ENCODE measurements at regions of chrX and their contacts with region 1.

Region 1: DNA sequence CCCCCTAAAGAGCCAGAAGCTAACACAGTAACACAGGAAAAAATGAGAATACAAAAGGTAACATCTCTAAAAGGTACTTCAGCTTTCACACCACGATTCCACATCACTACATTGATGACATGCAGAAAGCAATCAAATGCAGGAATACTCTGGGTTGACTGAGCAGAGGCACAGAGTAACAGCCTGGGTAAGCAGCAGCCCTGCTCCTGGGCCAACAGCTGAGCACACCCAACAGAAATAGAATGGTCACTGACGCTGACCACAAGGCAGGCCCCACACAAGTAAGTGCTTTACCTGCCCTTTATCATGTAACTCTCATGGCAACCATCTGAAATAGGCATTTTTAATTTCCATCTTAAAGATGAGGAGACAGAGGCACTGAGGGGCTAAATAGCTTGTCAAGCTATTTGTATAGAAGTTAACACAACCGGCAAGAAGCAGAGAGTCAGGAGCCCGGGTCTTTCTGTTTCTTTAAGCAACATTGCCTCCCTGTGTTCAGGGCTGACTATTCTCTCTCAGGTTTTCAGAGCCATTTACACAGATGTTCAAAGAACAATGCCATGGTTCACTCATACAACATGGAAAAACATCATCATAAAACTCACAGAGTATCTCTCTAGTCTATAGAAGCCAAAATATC is 168.9 kb downstream of the ZNF674 start:
- DNase-seq: peak; percentile 1
- H3K4me3 Mint-ChIP-seq: no peak overlapping the region
- H3K27ac Mint-ChIP-seq: no peak overlapping the region
- H3K4me1 Mint-ChIP-seq: peaks cover 7% of the 10 kb centered on the region
- H3K27me3 Mint-ChIP-seq: no peaks in the 10 kb centered on the region

Region 2: GRCh38 chrX:45515262-45516215 is 860.8 kb before region 1 on chrX:
- intact Hi-C with region 1: loop called (anchors 1 kb)
- DNase-seq: peak; percentile 1
- H3K4me3 Mint-ChIP-seq: no peak overlapping the region
- H3K27ac Mint-ChIP-seq: peak overlapping the region; percentile 65
- H3K4me1 Mint-ChIP-seq: peaks cover 25% of the 10 kb centered on the region
- H3K27me3 Mint-ChIP-seq: no peaks in the 10 kb centered on the region

Region 3: GRCh38 chrX:45801554-45801953 is 574.8 kb before region 1 on chrX:
- intact Hi-C with region 1: loop called (anchors 2 kb)
- DNase-seq: no peak
- H3K4me3 Mint-ChIP-seq: peak overlapping the region; percentile 26
- H3K27ac Mint-ChIP-seq: peak overlapping the region; percentile 11
- H3K4me1 Mint-ChIP-seq: peaks cover 70% of the 10 kb centered on the region
- H3K27me3 Mint-ChIP-seq: peaks cover 3% of the 10 kb centered on the region

Region 4: GRCh38 chrX:46125111-46125510 is 251.3 kb before region 1 on chrX:
- intact Hi-C with region 1: loop called (anchors 10 kb)
- DNase-seq: no peak
- H3K4me3 Mint-ChIP-seq: no peak overlapping the region
- H3K27ac Mint-ChIP-seq: no peak overlapping the region
- H3K4me1 Mint-ChIP-seq: no peaks in the 10 kb centered on the region
- H3K27me3 Mint-ChIP-seq: no peaks in the 10 kb centered on the region

Region 5: GRCh38 chrX:46268429-46268828 is 107.9 kb before region 1 on chrX:
- intact Hi-C with region 1: no loop called
- DNase-seq: no peak
- H3K4me3 Mint-ChIP-seq: no peak overlapping the region
- H3K27ac Mint-ChIP-seq: no peak overlapping the region
- H3K4me1 Mint-ChIP-seq: no peaks in the 10 kb centered on the region
- H3K27me3 Mint-ChIP-seq: no peaks in the 10 kb centered on the region

Region 6: DNA sequence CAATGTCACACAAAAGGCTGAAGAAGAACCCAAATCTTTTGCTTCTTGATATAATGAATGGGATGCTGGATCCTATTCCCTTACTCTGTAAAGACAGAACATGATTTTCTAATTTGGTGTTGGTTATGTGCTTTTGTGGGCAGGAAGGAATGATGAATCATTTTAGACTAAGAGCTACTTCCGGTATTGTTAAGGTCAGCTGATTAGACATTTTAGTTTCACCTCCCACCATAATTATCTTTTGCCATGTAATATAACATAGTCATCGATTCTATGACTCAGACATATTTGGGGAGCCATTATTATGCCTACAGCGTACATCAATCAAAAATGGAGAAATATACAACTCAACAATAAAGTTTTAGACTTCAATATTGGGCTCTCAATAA is 96.4 kb before region 1 on chrX:
- intact Hi-C with region 1: no loop called
- DNase-seq: no peak
- H3K4me3 Mint-ChIP-seq: no peak overlapping the region
- H3K27ac Mint-ChIP-seq: peak overlapping the region; percentile 23
- H3K4me1 Mint-ChIP-seq: peaks cover 20% of the 10 kb centered on the region
- H3K27me3 Mint-ChIP-seq: no peaks in the 10 kb centered on the region

Region 7: DNA sequence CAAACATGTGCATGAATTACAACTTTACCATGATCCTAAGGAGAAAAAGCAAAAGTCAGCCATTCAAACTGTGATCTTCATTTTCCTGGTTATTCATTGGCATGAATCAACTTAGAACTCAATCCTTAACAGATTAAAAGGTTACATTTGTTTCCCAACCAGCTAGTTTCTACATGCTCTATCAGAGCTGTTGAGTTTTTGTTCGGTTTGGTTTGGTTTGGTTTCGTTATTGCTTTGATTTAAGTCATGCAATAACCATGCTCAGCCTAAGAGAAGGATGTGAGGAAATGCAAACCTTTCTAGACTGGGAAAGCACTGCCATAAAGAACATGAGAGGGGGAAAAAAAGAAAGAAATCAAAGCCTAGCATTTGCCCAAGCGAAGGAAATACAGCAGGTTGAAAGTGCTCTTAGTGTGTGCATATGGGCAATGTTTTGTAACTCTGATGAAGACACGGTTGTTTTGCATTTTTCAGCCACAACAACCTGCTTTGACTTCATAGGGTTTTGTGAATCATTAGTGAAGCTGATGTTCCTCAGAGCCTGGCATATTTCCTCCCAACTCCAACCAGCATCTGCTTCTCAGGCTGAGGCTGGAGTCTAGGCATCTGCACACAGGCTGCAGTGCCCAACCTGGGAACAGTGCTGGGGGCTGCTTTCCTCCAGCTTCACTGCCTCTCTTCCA is 65.4 kb before region 1 on chrX:
- intact Hi-C with region 1: loop called (anchors 5 kb)
- DNase-seq: no peak
- H3K4me3 Mint-ChIP-seq: no peak overlapping the region
- H3K27ac Mint-ChIP-seq: peak overlapping the region; percentile 80
- H3K4me1 Mint-ChIP-seq: peaks cover 8% of the 10 kb centered on the region
- H3K27me3 Mint-ChIP-seq: no peaks in the 10 kb centered on the region

Region 8: GRCh38 chrX:47078129-47079043 is 702.0 kb after region 1 on chrX and contains the start of gene RGN:
- intact Hi-C with region 1: no loop called
- DNase-seq: no peak
- H3K4me3 Mint-ChIP-seq: no peak within 1 kb of the TSS
- H3K27ac Mint-ChIP-seq: no peak within 1 kb of the TSS
- H3K4me1 Mint-ChIP-seq: no peaks in the 10 kb centered on the region
- H3K27me3 Mint-ChIP-seq: no peaks in the 10 kb centered on the region
- total RNA-seq, gene RGN: not detected in 2 replicates